ENCODE measurements at regions of chr6 and their contacts with region 1.

Region 1: DNA sequence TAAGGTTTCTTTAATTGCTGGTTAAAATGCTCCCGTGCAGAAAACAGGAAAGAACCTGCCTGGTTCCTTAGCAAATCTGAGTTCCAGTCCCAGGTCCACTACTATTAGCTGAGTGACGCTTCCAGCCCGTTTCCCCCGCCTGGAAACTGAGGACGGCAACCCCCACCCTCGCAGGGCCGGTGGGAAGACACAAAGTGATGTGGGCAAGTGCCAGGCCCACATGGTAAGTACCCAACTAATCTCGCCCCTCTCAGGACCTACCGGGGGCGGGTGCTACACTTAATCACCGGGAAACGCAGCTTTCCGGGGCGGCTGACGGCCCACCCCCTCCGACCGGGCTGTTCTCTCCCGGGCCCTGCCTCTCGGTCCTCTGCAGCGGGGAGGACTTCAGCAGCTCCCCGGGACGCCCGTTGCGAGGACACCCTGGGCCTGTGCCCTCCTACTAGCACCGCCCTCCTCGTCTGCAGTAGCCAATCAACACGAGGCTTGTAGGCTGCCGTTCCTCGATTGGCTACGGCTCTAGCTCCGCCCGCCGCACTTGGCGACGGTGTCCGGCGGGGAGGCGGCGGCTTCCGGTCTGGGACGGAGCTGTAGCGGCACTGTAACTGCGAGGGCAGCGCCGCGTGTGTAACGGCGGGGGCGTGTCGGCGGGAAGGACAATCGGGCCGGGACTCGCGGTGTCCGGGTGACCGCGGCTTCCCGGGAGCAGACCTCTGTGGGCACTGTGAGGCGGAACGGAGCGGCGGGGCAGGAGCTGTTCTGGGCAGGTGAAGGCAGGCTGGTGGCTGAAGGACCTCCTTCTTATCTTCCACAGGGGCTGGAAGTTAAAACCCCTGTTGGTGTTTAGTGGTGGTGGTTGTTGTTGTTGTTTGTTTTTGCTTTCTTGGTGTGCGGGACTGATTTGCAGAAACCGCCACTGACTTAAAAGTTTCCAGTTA is at the start of gene ZBTB9:
- DNase-seq: peak; percentile 96
- ATAC-seq: peak; percentile 99
- H3K4me3 ChIP-seq: peak within 1 kb of the TSS; percentile 92 to 100 (median 95)
- H3K27ac ChIP-seq: peak within 1 kb of the TSS; percentile 46
- H3K4me1 ChIP-seq: peaks cover 20% of the 10 kb centered on the region
- H3K27me3 ChIP-seq: no peaks in the 10 kb centered on the region; a peak in 1 of 5 replicates
- CTCF ChIP-seq: peak; percentile 49
- EP300 ChIP-seq: no peak
- POLR2A ChIP-seq: peak; percentile 87 to 98
- RAD21 ChIP-seq: 0 out of 2 replicates have a peak, but pooled peaks have one; percentile 28
- total RNA-seq, gene ZBTB9: 9.2 and 11.5 TPM in 2 replicates

Region 2: GRCh38 chr6:33425668-33426577 is 28.4 kb before region 1 on chr6:
- CTCF ChIA-PET with region 1: no interaction called
- POLR2A ChIA-PET with region 1: interaction called, 17 read pairs
- in situ Hi-C with region 1: no loop called
- intact Hi-C with region 1: loop called (anchors 1 kb)
- DNase-seq: peak; percentile 73
- ATAC-seq: peak; percentile 76
- H3K4me3 ChIP-seq: peak overlapping the region; percentile 68 to 74 (median 74)
- H3K27ac ChIP-seq: peak overlapping the region; percentile 46
- H3K4me1 ChIP-seq: peaks cover 51% of the 10 kb centered on the region
- H3K27me3 ChIP-seq: peaks cover 2 to 35% of the 10 kb centered on the region in 2 experiments; a peak in 3 of 5 replicates
- CTCF ChIP-seq: peak; percentile 84
- EP300 ChIP-seq: no peak
- POLR2A ChIP-seq: peak in 1 of 2 experiments; percentile 81; a peak in 2 of 4 replicates
- RAD21 ChIP-seq: peak; percentile 72

Region 3: DNA sequence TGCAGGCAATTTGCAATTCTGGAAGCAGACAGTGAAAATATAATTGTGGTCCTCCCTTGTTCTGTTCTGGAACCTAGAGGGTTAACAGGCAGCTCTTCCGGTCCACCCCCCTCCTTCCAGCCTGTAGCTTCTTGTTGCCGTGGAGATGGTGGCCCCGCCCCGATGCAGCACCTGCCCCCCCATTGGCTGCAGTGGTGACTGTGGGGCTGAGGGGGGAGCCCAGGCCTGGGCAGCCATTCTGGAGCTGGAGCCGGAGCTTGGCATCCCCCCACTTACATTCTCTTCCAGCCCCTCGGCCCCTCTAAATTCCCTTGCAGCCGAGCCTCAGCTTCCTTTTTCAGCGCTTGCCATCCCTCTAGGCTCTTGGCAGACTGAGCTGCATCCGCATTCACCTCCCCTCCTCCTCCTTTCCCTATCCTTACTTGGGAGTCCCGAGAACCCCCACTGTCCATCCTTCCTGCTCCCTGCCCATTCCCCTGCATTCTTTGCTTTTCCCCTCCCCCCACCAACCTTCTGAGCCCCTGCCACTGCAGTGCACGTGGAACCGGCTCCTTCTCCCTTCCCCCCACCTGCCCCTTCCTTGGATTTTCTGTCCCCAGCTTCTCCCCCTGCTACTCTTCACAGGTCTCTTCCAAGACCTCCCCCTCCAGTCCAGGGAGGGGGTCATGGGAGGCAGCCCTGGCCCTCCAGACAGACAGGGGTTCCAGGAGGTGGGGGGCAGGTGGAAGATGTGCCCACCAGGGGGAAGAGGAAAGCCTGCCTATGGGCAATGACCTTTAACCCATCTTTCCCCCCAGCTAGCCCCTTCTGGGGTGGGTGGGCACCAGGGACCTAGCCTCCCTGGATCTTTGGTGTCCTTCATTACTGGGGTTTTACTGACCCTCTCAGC is 23.0 kb before region 1 on chr6:
- CTCF ChIA-PET with region 1: no interaction called
- POLR2A ChIA-PET with region 1: interaction called, 17 read pairs
- in situ Hi-C with region 1: no loop called
- intact Hi-C with region 1: loop called (anchors 1 kb)
- DNase-seq: peak; percentile 46
- ATAC-seq: peak; percentile 12; the same call in 1 of the 3 replicates
- H3K4me3 ChIP-seq: peak overlapping the region in 1 of 3 experiments; percentile 8; a peak in 1 of 6 replicates
- H3K27ac ChIP-seq: no peak overlapping the region
- H3K4me1 ChIP-seq: peaks cover 42% of the 10 kb centered on the region
- H3K27me3 ChIP-seq: no peaks in the 10 kb centered on the region
- CTCF ChIP-seq: no peak
- EP300 ChIP-seq: no peak
- POLR2A ChIP-seq: no peak
- RAD21 ChIP-seq: no peak

Region 4: DNA sequence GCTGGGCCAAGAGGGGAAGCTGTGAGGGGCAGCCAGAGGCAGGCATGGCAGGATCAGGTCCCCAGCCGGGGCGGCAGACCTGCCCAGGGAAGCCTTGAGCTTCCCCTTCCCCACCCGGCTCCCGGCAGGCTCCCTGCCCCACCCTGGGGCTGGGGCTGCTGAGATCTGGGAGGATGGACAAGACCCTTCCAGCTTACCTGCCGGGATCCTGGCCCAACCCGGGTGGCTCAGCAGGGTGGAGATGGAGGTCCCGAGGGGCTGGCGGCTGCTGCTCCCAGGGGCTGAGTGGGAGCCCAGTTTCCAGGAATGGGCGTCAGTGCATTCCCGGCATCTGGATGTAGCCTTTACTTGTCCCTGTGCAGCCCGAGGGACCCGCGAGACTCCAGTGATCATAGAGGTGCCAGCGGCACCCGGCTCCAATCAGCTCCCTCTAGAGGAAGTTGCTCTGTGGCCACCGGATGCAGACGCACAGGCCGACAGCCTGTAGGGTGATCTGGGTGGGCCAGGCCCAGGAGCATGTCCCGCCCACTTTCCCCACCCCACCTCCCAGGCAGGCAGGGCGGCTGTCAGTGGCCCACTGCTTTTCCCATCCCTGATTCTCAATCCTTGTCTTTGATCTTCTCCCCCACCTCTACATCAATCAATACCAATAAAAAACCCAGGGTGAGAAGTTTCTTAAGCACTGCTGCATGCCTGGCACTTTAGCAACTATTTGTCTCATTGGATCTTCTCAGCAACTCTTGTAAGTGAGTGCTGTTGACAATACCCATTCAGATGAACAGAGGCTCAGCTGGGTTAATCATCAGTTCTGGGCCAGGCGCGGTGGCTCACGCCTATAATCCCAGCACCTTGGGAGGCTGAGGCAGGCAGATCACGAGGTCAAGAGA is 125.8 kb after region 1 on chr6 and contains the start of gene BAK1:
- CTCF ChIA-PET with region 1: no interaction called
- POLR2A ChIA-PET with region 1: interaction called, 5 read pairs
- in situ Hi-C with region 1: no loop called
- intact Hi-C with region 1: loop called (anchors 1 kb)
- DNase-seq: peak; percentile 93
- ATAC-seq: peak; percentile 97
- H3K4me3 ChIP-seq: peak within 1 kb of the TSS; percentile 77 to 91 (median 83)
- H3K27ac ChIP-seq: peak within 1 kb of the TSS; percentile 48
- H3K4me1 ChIP-seq: peaks cover 34% of the 10 kb centered on the region
- H3K27me3 ChIP-seq: no peaks in the 10 kb centered on the region
- CTCF ChIP-seq: peak; percentile 91
- EP300 ChIP-seq: no peak
- POLR2A ChIP-seq: peak; percentile 63 to 72; a peak in 3 of 4 replicates
- RAD21 ChIP-seq: peak; percentile 66
- total RNA-seq, gene BAK1: 23.8 and 25.9 TPM in 2 replicates

Measured in HepG2 (cell line).